Dorsolateral prefrontal cortex (tissue), 120 donors: ENCODE measurements at regions of chr10 and their contacts with region 1.

Region 1: GRCh38 chr10:91340613-91341362 is 69.4 kb upstream of the HECTD2 start:
- DNase-seq: peak in 8 of 10 donors; percentile 29 to 81 (median 63)
- H3K4me3 ChIP-seq: no peak overlapping the region
- H3K27ac ChIP-seq: peak overlapping the region in 33 of 59 donors; percentile 4 to 80 (median 49)
- H3K27me3 ChIP-seq: no peaks in the 10 kb centered on the region
- CTCF ChIP-seq: no peak

Region 2: DNA sequence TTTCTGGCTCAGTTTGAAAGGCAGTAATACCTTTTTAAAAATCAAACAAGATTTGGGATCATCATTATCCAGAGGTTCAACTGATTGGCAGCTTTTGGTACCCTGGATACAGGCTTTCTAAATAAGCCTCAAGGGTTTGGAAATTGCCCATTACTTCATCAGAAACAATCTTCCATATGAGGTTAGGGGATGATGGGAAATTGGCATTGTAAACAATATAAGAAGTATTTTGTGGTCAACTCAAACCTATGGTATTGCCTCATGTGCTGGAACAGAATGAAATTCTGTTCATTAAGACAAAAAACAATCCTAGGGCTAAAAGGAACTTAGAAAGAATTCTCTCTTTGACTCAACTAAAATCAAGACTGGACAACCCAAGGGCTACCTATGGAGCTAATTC is 23.2 kb before region 1 on chr10:
- intact Hi-C with region 1: no loop called
- DNase-seq: no peak
- H3K4me3 ChIP-seq: no peak overlapping the region
- H3K27ac ChIP-seq: no peak overlapping the region
- H3K27me3 ChIP-seq: no peaks in the 10 kb centered on the region
- CTCF ChIP-seq: no peak

Region 3: GRCh38 chr10:91409869-91410637 is 69.3 kb after region 1 on chr10 and contains the start of gene HECTD2:
- intact Hi-C with region 1: loop called in 1 of 2 experiments (anchors 2 kb)
- DNase-seq: peak; percentile 40 to 88 (median 75)
- H3K4me3 ChIP-seq: peak within 1 kb of the TSS; percentile 63 to 99 (median 89)
- H3K27ac ChIP-seq: peak within 1 kb of the TSS; percentile 92 to 100 (median 99)
- H3K27me3 ChIP-seq: no peaks in the 10 kb centered on the region
- CTCF ChIP-seq: peak in 48 of 56 donors; percentile 2 to 65 (median 41)
- total RNA-seq, gene HECTD2: 13.3 to 40.3 (median 26.3) TPM

Region 4: DNA sequence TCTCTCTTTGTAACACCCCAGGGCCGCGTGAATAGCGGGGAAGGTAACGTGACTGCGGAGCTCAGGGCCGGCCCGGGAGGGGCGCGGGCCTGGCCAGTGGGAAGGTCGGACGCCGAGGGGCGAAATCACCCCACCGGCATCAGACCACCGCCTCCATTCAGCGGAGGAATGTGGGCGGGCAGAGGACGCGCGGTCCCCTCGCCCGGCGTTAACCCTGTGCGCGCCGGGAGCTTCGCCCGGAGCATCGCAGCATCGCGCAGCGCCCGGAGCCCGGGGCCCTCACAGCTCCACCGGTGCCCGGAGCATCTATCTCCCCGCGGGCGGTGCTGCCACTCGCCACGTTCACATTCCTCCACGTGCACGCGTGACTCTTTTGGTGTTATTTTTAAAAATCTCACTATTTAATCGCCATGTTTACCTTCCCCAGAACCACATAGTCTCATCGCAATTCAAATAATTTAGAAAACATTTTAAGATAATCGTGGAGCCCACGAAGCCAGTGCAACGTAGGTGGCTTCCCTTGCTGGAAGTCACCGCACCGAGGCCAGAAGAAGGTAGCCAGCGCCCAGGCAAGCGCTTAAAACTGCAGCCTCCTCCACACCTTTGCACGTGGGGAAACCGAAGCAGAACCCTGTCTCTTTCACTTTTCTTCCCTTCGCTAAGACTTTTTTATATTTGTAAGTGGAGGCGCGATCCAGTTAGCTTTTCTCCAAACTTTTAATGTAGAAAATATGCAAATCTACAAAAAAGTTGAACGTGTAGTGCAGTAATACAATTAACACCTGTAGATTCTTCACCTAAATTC is 546.7 kb after region 1 on chr10:
- intact Hi-C with region 1: no loop called
- DNase-seq: peak; percentile 27 to 73 (median 52)
- H3K4me3 ChIP-seq: peak overlapping the region; percentile 47 to 89 (median 70)
- H3K27ac ChIP-seq: peak overlapping the region in 51 of 59 donors; percentile 4 to 85 (median 61)
- H3K27me3 ChIP-seq: no peaks in the 10 kb centered on the region
- CTCF ChIP-seq: peak in 1 of 56 donors; percentile 8